ENCODE measurements at regions of chr11 and their contacts with region 1.

Region 1: GRCh38 chr11:60775420-60775961 is 9.6 kb upstream of the MS4A10 start:
- DNase-seq: peak; percentile 85
- ATAC-seq: peak; percentile 95
- H3K4me3 ChIP-seq: no peak overlapping the region
- H3K27ac ChIP-seq: no peak overlapping the region; the same call in 1 of the 2 replicates
- H3K4me1 ChIP-seq: peaks cover 0 to 19% of the 10 kb centered on the region in 2 experiments; a peak in 3 of 4 replicates
- H3K27me3 ChIP-seq: no peaks in the 10 kb centered on the region
- CTCF ChIP-seq: peak; percentile 87 to 92 (median 90)
- POLR2A ChIP-seq: no peak
- RAD21 ChIP-seq: peak; percentile 91

Region 2: GRCh38 chr11:60831143-60831500 is 55.6 kb after region 1 on chr11:
- CTCF ChIA-PET with region 1: interaction called, 13 read pairs
- POLR2A ChIA-PET with region 1: no interaction called
- RAD21 ChIA-PET with region 1: no interaction called
- intact Hi-C with region 1: loop called (anchors 1 kb)
- DNase-seq: peak; percentile 68
- ATAC-seq: peak; percentile 98
- H3K4me3 ChIP-seq: peak overlapping the region; percentile 4 to 13; a peak in 2 of 4 replicates
- H3K27ac ChIP-seq: no peak overlapping the region
- H3K4me1 ChIP-seq: peaks cover 0 to 5% of the 10 kb centered on the region in 2 experiments; a peak in 2 of 4 replicates
- H3K27me3 ChIP-seq: peaks cover 14% of the 10 kb centered on the region; the same call in 1 of the 2 replicates
- CTCF ChIP-seq: peak; percentile 88 to 98 (median 91)
- POLR2A ChIP-seq: no peak
- RAD21 ChIP-seq: peak; percentile 97

Region 3: GRCh38 chr11:60899046-60899936 is 123.8 kb after region 1 on chr11:
- CTCF ChIA-PET with region 1: interaction called, 10 read pairs
- POLR2A ChIA-PET with region 1: no interaction called
- RAD21 ChIA-PET with region 1: no interaction called
- intact Hi-C with region 1: no loop called
- DNase-seq: peak; percentile 51
- ATAC-seq: peak; percentile 95
- H3K4me3 ChIP-seq: no peak overlapping the region
- H3K27ac ChIP-seq: no peak overlapping the region; the same call in 1 of the 2 replicates
- H3K4me1 ChIP-seq: peaks cover 0 to 3% of the 10 kb centered on the region in 2 experiments; a peak in 1 of 4 replicates
- H3K27me3 ChIP-seq: no peaks in the 10 kb centered on the region
- CTCF ChIP-seq: peak; percentile 67 to 93 (median 93); a peak in 5 of 6 replicates
- POLR2A ChIP-seq: no peak
- RAD21 ChIP-seq: peak; percentile 52; the same call in 1 of the 2 replicates

Region 4: GRCh38 chr11:61187505-61188130 is 412.1 kb after region 1 on chr11:
- CTCF ChIA-PET with region 1: no interaction called
- POLR2A ChIA-PET with region 1: no interaction called
- RAD21 ChIA-PET with region 1: no interaction called
- intact Hi-C with region 1: loop called (anchors 2 kb)
- DNase-seq: peak; percentile 74
- ATAC-seq: peak; percentile 93
- H3K4me3 ChIP-seq: no peak overlapping the region
- H3K27ac ChIP-seq: no peak overlapping the region
- H3K4me1 ChIP-seq: no peaks in the 10 kb centered on the region
- H3K27me3 ChIP-seq: no peaks in the 10 kb centered on the region
- CTCF ChIP-seq: peak; percentile 88 to 95 (median 93)
- POLR2A ChIP-seq: no peak
- RAD21 ChIP-seq: peak; percentile 95